ENCODE measurements at regions of chr1 and their contacts with region 1.

Region 1: GRCh38 chr1:6646499-6647148 is 22.0 kb downstream of the THAP3 start:
- DNase-seq: peak; percentile 43 to 68 (median 64)
- H3K4me3 ChIP-seq: no peak overlapping the region
- H3K27ac ChIP-seq: no peak overlapping the region
- H3K4me1 ChIP-seq: no peaks in the 10 kb centered on the region
- H3K27me3 ChIP-seq: no peaks in the 10 kb centered on the region

Region 2: DNA sequence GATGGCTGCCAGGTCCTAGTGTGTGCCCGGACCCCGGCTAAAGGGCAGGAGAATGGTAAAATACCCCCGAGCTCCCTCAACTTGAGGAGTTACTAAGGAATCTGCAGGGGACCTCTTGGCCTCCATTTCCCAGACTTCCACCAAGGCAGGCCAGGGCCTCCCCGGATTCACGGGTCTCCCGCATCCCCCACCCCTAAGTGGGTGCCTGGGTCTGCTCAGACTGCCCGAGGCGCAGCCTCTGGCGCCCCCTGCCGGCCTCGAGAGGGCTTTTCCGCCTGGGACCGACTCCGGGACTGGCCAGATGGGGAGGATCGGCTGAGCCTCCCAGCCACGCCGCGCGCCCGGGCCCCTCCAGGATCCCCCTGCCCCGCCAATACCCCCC is 156.8 kb before region 1 on chr1:
- CTCF ChIA-PET with region 1: interaction called, 19 read pairs
- POLR2A ChIA-PET with region 1: no interaction called
- DNase-seq: peak; percentile 64 to 79 (median 75)
- H3K4me3 ChIP-seq: peak overlapping the region; percentile 53 to 82 (median 63)
- H3K27ac ChIP-seq: no peak overlapping the region
- H3K4me1 ChIP-seq: peaks cover 0 to 32% (median 26%) of the 10 kb centered on the region in 4 experiments
- H3K27me3 ChIP-seq: peaks cover 0 to 25% (median 7%) of the 10 kb centered on the region in 5 experiments

Region 3: DNA sequence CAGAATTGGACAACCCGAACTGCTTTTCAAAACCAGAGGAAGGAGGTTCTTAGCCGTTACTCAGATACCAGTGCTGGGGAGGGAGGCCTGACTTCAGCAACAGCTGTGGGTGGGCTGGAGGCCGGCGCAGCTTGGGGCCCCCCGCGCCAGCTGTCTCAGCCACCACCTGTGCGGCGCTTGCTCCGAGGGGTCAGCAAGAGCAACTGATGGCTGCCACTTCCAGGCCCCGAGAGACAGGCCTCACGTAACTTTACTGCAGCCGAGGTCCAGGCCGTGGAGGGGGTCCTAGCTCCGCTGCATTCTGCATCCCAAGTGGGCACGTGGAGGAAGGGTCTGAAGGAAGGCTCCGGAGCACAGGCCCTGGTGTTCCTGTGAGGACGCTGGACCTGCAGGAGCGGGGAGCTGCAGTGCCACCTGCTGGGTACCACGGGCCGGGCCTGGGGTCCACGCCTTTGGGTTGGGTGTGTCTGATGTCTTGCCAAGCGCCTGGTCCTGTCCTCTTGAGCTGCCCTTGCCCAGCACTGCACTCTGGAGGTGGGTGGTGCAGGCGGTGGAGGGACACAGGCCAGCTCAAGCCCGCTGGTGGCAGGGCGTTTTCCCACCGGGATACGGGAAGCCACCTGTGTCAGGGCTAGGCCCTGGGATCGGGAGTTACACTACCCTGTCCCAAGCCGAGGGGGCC is 12.1 kb before region 1 on chr1:
- CTCF ChIA-PET with region 1: interaction called, 10 read pairs
- POLR2A ChIA-PET with region 1: no interaction called
- DNase-seq: peak; percentile 47 to 63 (median 63)
- H3K4me3 ChIP-seq: no peak overlapping the region
- H3K27ac ChIP-seq: no peak overlapping the region
- H3K4me1 ChIP-seq: no peaks in the 10 kb centered on the region
- H3K27me3 ChIP-seq: no peaks in the 10 kb centered on the region

Region 4: GRCh38 chr1:6658359-6659060 is 11.9 kb after region 1 on chr1:
- CTCF ChIA-PET with region 1: interaction called, 12 read pairs
- POLR2A ChIA-PET with region 1: no interaction called
- DNase-seq: no peak
- H3K4me3 ChIP-seq: no peak overlapping the region
- H3K27ac ChIP-seq: peak overlapping the region in 1 of 2 experiments; percentile 49
- H3K4me1 ChIP-seq: no peaks in the 10 kb centered on the region
- H3K27me3 ChIP-seq: no peaks in the 10 kb centered on the region

Region 5: GRCh38 chr1:6889875-6890480 is 243.4 kb after region 1 on chr1:
- CTCF ChIA-PET with region 1: no interaction called
- POLR2A ChIA-PET with region 1: no interaction called
- DNase-seq: peak; percentile 54 to 76 (median 70)
- H3K4me3 ChIP-seq: no peak overlapping the region
- H3K27ac ChIP-seq: no peak overlapping the region
- H3K4me1 ChIP-seq: no peaks in the 10 kb centered on the region
- H3K27me3 ChIP-seq: no peaks in the 10 kb centered on the region

Measured in common myeloid progenitor, CD34-positive (primary cell).